Activated T-helper 1 cell treated with anti-CD3 and anti-CD28 coated beads, Interleukin-12 subunit alpha, Interleukin-12 subunit beta, Interleukin-2, Interleukin-4 antibody, amounts not matched to agents 30 ng/mL and 10 ng/mL and 1 ng/mL, durations not matched to agents 14 hours and 24 hours and 36 hours (primary cell): ENCODE measurements at regions of chr12 and their contacts with region 1.

Region 1: DNA sequence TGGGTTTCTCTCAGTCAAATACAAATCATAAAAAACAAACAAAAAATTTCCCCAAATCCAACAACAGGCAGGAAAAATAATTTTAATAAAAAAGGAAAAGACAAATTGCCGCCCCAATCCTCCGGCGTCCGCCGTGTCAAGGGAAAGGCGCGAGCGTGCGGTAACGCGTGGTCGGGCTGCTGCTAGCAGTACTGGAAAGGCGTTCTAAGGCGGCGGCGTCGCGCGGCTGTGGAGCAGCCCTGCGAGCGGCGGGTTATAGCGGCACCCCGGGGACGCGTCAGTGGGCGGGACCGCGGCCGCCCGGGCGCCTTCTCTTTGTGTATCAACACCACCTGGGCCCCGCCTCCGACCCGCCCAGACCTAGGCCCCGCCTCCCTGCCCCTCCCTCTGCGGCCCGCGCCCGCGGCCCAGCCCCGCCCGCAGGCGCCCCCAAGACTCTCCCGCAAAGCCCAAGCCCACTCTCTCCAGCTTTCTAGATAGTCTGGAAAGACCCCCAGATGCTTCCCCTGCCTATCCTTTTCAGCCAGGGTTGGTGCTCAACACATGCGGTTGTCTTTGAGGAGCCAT is at the start of gene SLC38A2:
- DNase-seq: peak; percentile 95
- H3K4me3 Mint-ChIP-seq: peak within 1 kb of the TSS; percentile 92
- H3K27ac Mint-ChIP-seq: peak within 1 kb of the TSS; percentile 99
- H3K4me1 Mint-ChIP-seq: peaks cover 53% of the 10 kb centered on the region
- H3K27me3 Mint-ChIP-seq: peaks cover 3% of the 10 kb centered on the region
- total RNA-seq, gene SLC38A2: 157 and 161 TPM in 2 replicates

Region 2: DNA sequence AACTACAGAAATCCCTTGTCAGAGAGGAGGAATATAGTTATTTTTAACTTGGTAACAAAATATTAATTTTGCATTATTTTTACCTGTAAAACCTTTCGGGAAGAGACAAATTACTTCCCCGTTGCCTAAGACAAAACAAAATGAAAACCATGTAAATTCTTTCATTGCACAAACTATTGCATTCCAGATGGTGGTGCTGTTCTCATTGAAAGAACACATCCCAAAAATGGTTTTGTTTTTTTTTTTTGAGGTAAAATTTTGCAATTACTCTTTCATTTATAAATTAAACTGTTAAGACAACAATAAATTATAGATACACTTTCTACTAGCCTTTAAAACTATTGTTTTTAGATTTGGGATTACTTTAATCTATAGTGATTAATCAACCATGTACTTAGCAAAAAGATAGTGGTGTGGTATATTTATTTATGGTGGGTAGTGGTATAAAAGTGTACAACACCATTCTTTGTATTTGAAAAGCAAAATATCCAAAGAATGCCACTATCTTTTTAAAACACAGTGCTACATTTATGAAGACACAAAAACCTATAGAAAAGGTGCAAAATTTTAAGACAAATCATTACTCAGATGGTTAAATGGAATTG is 219.3 kb before region 1 on chr12:
- intact Hi-C with region 1: loop called (anchors 5 kb)
- DNase-seq: no peak
- H3K4me3 Mint-ChIP-seq: no peak overlapping the region
- H3K27ac Mint-ChIP-seq: no peak overlapping the region
- H3K4me1 Mint-ChIP-seq: no peaks in the 10 kb centered on the region
- H3K27me3 Mint-ChIP-seq: peaks cover 6% of the 10 kb centered on the region

Region 3: GRCh38 chr12:46268590-46269558 is 103.8 kb before region 1 on chr12 and contains the start of gene SLC38A1:
- intact Hi-C with region 1: loop called (anchors 1 kb)
- DNase-seq: peak; percentile 85
- H3K4me3 Mint-ChIP-seq: no peak within 1 kb of the TSS
- H3K27ac Mint-ChIP-seq: no peak within 1 kb of the TSS
- H3K4me1 Mint-ChIP-seq: peaks cover 28% of the 10 kb centered on the region
- H3K27me3 Mint-ChIP-seq: no peaks in the 10 kb centered on the region
- total RNA-seq, gene SLC38A1: 172 and 182 TPM in 2 replicates

Region 4: DNA sequence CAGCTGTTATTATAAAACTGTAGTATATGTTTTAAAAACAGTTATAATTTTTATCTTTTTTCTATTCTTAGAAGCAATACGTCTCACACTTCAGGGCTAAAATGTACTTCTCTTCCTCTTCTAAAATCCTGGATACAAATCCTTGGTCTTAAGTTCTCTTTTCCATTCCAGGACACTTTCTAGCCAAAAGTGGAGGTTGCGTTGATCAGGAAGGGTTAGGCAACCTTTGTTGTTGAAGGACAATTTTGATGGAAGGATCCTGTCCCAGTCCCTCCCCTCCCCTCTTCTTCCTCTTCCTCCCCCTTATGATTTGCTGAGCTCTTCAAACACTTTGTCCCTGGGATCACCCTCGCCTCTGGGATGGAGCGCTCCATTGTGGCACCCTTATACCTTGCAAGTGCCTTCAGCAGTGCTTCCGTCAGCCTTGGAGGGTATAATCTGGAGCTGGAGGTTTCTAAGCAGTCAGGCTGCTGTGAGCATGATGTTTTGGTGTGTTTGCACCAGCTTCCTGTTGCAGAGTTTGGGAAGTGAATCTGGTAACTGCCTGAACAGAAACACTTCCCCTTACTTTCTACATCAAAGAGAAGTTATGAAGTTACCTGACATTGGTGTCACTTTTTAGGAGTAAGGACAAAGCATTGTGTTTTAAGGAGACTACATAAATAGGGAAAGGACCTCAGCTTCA is 87.4 kb after region 1 on chr12:
- intact Hi-C with region 1: loop called (anchors 1 kb)
- DNase-seq: no peak
- H3K4me3 Mint-ChIP-seq: peak overlapping the region; percentile 88
- H3K27ac Mint-ChIP-seq: peak overlapping the region; percentile 99
- H3K4me1 Mint-ChIP-seq: peaks cover 61% of the 10 kb centered on the region
- H3K27me3 Mint-ChIP-seq: no peaks in the 10 kb centered on the region

Region 5: DNA sequence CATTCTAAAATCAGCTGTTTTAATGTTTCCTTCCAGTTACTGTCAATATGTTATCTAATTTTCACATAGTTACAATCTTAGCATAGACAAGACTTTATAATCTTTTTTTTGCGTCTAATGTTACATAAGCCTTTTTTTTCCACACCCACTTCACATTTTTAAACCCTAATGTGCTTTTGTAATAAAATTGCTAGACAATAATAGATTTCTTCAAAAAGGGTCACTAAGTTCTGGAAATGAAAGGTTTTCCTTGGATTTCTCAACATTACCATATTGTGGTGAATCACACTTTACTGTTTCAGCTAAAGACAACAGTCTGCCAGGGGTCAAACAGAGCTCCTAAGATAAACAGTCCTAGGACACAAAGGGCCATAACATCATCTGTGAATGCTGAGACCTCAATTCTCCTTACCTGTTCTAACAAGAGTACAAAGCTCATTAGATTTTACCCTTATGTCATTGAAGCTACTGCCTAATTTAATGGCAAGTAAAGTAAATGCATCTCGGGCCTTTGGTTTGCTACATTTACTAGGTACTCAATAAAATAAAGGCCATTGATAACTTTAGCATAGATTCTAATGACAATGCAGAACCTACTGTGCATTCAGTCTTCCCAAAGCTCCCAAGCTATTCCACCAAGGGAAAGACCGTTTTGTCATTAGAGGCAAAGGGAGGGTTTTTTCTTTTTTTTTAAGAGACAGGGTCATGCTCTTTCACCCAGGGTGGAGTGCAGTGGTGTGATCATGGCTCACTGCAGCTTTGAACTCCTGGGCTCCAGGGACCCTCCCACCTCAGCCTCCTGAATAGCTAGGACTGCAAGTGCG is 111.2 kb after region 1 on chr12:
- intact Hi-C with region 1: no loop called
- DNase-seq: no peak
- H3K4me3 Mint-ChIP-seq: no peak overlapping the region
- H3K27ac Mint-ChIP-seq: no peak overlapping the region
- H3K4me1 Mint-ChIP-seq: no peaks in the 10 kb centered on the region
- H3K27me3 Mint-ChIP-seq: no peaks in the 10 kb centered on the region

Region 6: DNA sequence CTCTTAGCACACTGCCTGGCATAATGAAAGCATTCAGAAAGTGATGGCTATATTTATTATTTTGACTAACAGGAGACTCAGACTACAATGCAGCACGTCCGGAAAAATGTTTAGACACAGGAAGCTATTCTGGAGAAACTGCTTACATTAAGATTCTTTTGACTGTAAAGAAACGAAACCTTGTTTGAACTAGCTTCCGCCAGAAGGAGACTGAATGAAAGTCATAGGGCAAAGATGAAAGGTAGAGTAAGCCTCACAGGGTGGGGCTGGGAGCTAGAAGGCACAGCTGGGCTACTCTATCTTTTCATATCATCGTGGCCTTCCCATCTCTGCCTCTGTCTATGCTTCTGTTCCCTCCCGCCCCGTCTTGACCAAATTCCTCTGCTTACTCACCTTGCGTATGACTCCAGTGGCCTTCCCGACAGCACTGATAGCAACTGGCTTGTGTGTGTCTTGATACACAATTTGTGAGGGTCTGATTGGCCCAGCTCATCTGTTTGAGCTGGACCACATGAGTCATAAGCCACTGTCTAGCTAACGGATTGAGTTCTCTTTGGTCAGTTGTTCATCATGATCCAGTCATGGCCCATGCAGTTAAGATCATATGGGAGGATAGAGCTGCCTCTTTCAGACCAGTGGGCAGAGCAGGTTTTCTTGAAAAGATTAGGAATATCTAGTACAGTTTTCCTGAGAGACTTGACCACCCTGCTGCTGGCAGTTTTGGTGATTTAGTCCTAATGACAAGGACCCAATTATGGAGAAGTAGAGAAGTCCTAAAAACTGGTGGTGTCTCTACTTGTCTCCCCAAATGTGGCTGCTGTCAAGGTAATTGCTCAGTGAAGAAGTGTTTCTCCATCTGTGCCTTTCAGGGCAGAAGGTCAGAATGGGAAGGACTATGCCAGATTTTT is 151.5 kb after region 1 on chr12:
- intact Hi-C with region 1: loop called (anchors 1 kb)
- DNase-seq: peak; percentile 48
- H3K4me3 Mint-ChIP-seq: peak overlapping the region; percentile 81
- H3K27ac Mint-ChIP-seq: peak overlapping the region; percentile 99
- H3K4me1 Mint-ChIP-seq: peaks cover 52% of the 10 kb centered on the region
- H3K27me3 Mint-ChIP-seq: no peaks in the 10 kb centered on the region

Region 7: GRCh38 chr12:46661110-46661845 is 288.7 kb after region 1 on chr12:
- intact Hi-C with region 1: loop called (anchors 1 kb)
- DNase-seq: no peak
- H3K4me3 Mint-ChIP-seq: no peak overlapping the region
- H3K27ac Mint-ChIP-seq: no peak overlapping the region
- H3K4me1 Mint-ChIP-seq: peaks cover 54% of the 10 kb centered on the region
- H3K27me3 Mint-ChIP-seq: no peaks in the 10 kb centered on the region